ENCODE measurements at regions of chr2 and their contacts with region 1.

Region 1: GRCh38 chr2:43226558-43226954 is at the start of gene ZFP36L2:
- DNase-seq: peak; percentile 98
- H3K4me3 ChIP-seq: peak within 1 kb of the TSS; percentile 73 to 96 (median 92)
- H3K27ac ChIP-seq: peak within 1 kb of the TSS; percentile 99 to 100 (median 100)
- H3K4me1 ChIP-seq: peaks cover 0 to 48% (median 36%) of the 10 kb centered on the region in 4 donors
- H3K27me3 ChIP-seq: no peaks in the 10 kb centered on the region
- CTCF ChIP-seq: no peak
- EP300 ChIP-seq: no peak
- POLR2A ChIP-seq: peak; percentile 97 to 98
- total RNA-seq, gene ZFP36L2: 59.8 to 115 (median 72.3) TPM

Region 2: GRCh38 chr2:42947809-42948600 is 278.6 kb before region 1 on chr2:
- intact Hi-C with region 1: loop called (anchors 2 kb)
- DNase-seq: no peak
- H3K4me3 ChIP-seq: no peak overlapping the region
- H3K27ac ChIP-seq: no peak overlapping the region
- H3K4me1 ChIP-seq: peaks cover 0 to 9% (median 7%) of the 10 kb centered on the region in 4 donors
- H3K27me3 ChIP-seq: no peaks in the 10 kb centered on the region
- CTCF ChIP-seq: no peak
- EP300 ChIP-seq: no peak
- POLR2A ChIP-seq: no peak

Region 3: GRCh38 chr2:43018179-43019024 is 208.2 kb before region 1 on chr2:
- intact Hi-C with region 1: loop called (anchors 2 kb)
- DNase-seq: peak; percentile 98
- H3K4me3 ChIP-seq: no peak overlapping the region
- H3K27ac ChIP-seq: peak overlapping the region; percentile 56 to 75 (median 66)
- H3K4me1 ChIP-seq: peaks cover 0 to 17% (median 13%) of the 10 kb centered on the region in 4 donors
- H3K27me3 ChIP-seq: no peaks in the 10 kb centered on the region
- CTCF ChIP-seq: no peak
- EP300 ChIP-seq: peak in 2 of 4 donors; percentile 30 to 77
- POLR2A ChIP-seq: no peak

Region 4: DNA sequence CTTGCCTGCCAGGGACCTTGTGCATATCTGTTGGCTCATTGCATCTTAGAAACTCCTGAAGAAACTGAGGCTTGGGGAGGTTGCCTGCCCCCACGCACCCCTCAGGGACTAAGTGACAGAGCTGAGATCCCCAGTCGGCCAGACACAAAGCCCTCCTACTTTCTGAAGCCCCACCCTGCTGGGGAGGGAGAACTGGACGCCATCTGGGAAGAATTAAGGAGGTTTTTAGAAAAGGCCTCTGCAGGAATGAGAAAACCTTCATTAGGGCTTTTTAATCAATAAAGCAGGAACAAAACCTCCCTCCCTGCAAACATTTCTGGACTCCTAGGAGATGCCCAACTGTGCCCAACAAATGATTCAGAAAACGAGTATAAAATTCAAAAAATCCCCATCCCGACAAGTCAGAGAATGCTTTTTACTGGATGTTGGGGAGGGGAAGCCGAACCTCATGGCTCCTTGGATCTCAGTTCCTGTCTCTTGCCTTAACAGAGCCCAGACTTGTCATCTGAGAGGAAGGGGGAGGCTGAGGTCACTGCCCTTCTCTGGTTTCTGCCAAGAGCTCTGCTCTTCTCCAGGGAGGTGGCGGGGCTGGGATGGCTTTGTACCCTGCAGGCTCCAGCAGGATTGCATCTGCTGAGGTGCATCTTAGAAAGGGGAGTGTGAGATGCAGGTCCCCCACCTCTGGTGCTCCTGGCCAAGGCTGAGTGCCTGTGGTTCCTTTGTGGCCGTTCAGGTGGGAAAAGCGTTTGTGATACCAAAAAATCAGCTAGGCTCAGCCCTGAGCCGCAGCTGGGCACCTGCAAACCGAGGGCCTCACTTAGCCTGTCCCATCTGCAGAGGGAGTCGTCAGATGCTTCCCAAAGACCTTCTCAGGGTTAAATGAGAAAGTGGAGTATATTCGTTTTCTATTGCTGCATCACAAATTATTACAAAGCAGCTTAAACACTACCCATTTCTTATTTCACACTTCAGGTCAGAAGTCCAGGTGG is 142.6 kb before region 1 on chr2:
- intact Hi-C with region 1: loop called (anchors 2 kb)
- DNase-seq: peak; percentile 88
- H3K4me3 ChIP-seq: no peak overlapping the region
- H3K27ac ChIP-seq: peak overlapping the region; percentile 88 to 95 (median 92)
- H3K4me1 ChIP-seq: peaks cover 0 to 87% (median 83%) of the 10 kb centered on the region in 4 donors
- H3K27me3 ChIP-seq: no peaks in the 10 kb centered on the region
- CTCF ChIP-seq: no peak
- EP300 ChIP-seq: peak in 2 of 4 donors; percentile 61 to 77
- POLR2A ChIP-seq: no peak

Region 5: DNA sequence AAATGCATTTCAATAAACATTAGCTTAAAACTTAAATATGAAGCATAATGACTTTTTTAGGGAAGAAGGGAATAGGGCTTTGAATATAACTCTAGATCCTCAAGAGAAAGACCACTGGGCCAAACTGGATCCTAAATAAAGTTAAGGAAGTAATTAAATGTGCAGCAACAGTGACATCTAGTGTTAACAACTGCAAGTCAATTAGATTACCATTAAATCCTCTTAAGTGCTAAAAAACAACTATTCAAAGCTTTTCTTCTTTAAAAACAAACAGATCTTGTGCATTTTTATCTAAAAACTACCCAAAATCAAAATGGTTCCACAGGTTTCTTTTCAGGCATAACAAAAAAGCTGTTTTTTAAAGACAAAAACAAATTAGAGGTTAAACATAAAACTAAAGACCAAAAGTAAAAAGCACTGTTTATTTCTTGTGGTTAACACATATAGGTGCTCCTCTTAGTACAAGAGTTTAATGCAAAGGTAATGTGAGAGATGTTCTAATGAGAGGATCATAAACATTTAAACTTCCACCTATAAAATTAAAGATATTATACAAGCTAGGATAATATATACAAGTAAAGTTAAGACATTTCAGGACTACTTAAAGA is 257.9 kb after region 1 on chr2:
- intact Hi-C with region 1: loop called (anchors 1 kb)
- DNase-seq: no peak
- H3K4me3 ChIP-seq: no peak overlapping the region
- H3K27ac ChIP-seq: peak overlapping the region; percentile 68 to 80 (median 76)
- H3K4me1 ChIP-seq: peaks cover 0 to 41% (median 29%) of the 10 kb centered on the region in 4 donors
- H3K27me3 ChIP-seq: no peaks in the 10 kb centered on the region
- CTCF ChIP-seq: peak; percentile 43 to 75 (median 66)
- EP300 ChIP-seq: no peak
- POLR2A ChIP-seq: no peak

Measured in sigmoid colon (tissue), 7 donors.